RWPE1 (cell line): ENCODE measurements at regions of chr1 and their contacts with region 1.

Region 1: DNA sequence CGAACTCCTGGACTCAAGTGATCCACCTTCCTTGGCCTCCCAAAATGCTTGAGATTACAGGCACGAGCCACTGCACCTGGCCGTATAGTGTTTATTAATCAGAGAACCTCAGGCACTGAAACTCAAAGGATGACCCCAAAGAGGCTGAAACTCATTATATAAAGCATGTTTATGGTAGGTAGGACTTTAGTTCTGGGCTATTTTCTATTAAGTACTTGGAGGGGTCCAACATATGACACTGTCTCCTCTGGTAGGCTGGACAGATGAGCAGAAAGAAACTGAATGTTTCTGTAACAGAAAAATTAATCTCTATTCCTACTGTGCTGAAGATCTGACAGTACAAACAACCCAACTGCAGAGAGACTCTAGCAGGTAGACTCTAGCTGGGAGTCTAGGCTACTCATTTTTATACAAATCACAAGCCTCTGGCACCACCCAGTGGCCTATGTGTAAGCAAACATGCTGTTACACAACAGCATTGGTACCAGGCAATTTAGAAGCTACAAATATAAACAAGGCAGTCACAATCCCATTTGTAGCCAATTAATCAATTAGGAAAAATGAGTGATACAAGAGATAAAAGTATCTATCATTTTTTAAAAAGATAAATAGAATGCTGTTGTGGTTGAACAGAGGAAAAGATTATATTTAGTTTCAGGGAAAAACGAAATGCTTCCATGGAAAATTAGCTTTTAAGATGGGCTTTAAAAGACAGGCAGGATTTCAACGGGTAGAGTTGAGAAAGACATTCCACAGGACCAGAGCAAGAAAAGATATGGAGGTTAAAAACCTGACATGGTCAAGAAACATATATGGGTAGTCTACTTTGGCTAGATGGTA is 10.4 kb downstream of the DCAF8 start:
- DNase-seq: peak; percentile 66
- H3K27ac ChIP-seq: no peak overlapping the region
- CTCF ChIP-seq: peak; percentile 72

Region 2: GRCh38 chr1:160219062-160219929 is 32.6 kb before region 1 on chr1:
- CTCF ChIA-PET with region 1: interaction called, 14 read pairs
- POLR2A ChIA-PET with region 1: no interaction called
- DNase-seq: peak; percentile 45
- H3K27ac ChIP-seq: peak overlapping the region; percentile 40
- CTCF ChIP-seq: no peak

Region 3: DNA sequence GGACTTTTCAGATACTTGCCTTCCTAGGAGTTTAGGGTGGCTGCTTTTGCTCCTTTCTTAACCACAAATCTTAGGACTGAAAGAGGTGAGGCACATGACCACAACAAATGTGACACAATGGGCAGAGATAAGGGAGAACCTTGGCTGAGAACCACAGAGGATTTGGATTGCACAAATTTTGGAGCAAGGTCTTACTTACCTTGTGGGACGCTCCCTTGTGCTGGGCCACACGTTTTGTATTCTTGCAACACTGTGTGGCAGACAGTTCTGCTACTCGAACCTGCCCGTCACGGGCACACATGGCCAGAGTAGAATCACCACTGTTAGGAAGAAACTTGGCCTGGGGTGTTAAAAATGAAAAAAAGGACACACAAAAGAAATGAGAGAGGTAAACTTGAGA is 13.5 kb before region 1 on chr1:
- CTCF ChIA-PET with region 1: interaction called, 13 read pairs
- POLR2A ChIA-PET with region 1: no interaction called
- DNase-seq: no peak
- H3K27ac ChIP-seq: no peak overlapping the region
- CTCF ChIP-seq: no peak